H1 (cell line): ENCODE measurements at regions of chr1 and their contacts with region 1.

Region 1: DNA sequence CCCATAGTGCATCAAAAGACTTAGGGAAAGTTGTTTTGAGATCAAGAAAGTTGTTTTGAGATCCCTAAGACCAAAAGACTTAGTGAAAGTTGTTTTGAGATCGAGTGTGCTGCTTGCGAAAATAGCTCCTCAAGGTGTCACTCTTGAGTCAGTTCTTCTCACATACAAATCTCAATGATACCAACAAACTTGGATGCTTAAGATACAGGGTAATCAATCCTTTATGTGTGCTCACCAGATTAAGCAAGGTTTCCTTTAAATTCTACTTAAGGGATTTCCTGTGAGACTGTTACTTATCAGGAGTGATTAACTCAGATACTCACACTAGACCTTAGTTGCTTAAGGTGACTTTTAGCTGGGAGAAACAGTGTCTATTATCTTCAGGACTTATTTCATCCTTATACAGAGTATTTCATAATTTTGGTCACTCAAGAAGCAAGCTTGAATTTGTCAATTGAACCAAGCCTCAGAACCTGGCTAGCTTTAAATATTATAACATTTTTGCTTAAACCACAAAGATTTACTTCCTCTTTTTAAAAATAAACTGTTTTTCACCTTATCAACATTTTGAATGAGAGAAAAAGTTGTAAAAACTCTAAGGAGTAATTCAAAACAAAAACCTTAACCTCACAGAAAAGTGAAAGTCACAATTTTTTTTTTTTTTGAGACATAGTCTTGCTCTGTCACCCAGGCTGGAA is 8.0 kb upstream of the RLF start:
- DNase-seq: no peak
- H3K4me3 ChIP-seq: no peak overlapping the region
- H3K27ac ChIP-seq: no peak overlapping the region
- H3K4me1 ChIP-seq: no peaks in the 10 kb centered on the region
- H3K27me3 ChIP-seq: no peaks in the 10 kb centered on the region
- CTCF ChIP-seq: peak in 2 of 3 experiments; percentile 59 to 78; a peak in 3 of 4 replicates
- EP300 ChIP-seq: no peak
- POLR2A ChIP-seq: no peak
- RAD21 ChIP-seq: peak; percentile 68 to 73

Region 2: GRCh38 chr1:40132383-40133311 is 20.6 kb before region 1 on chr1:
- CTCF ChIA-PET with region 1: interaction called, 10 read pairs
- POLR2A ChIA-PET with region 1: no interaction called
- DNase-seq: no peak
- H3K4me3 ChIP-seq: no peak overlapping the region
- H3K27ac ChIP-seq: no peak overlapping the region
- H3K4me1 ChIP-seq: no peaks in the 10 kb centered on the region; a peak in 1 of 7 replicates
- H3K27me3 ChIP-seq: no peaks in the 10 kb centered on the region
- CTCF ChIP-seq: no peak
- EP300 ChIP-seq: no peak
- POLR2A ChIP-seq: no peak
- RAD21 ChIP-seq: no peak

Region 3: GRCh38 chr1:40185951-40186864 is 33.0 kb after region 1 on chr1:
- CTCF ChIA-PET with region 1: interaction called, 33 read pairs
- POLR2A ChIA-PET with region 1: no interaction called
- DNase-seq: no peak
- H3K4me3 ChIP-seq: no peak overlapping the region
- H3K27ac ChIP-seq: no peak overlapping the region
- H3K4me1 ChIP-seq: peaks cover 0 to 3% (median 0%) of the 10 kb centered on the region in 4 experiments; a peak in 1 of 7 replicates
- H3K27me3 ChIP-seq: no peaks in the 10 kb centered on the region
- CTCF ChIP-seq: no peak
- EP300 ChIP-seq: no peak
- POLR2A ChIP-seq: no peak
- RAD21 ChIP-seq: no peak

Region 4: DNA sequence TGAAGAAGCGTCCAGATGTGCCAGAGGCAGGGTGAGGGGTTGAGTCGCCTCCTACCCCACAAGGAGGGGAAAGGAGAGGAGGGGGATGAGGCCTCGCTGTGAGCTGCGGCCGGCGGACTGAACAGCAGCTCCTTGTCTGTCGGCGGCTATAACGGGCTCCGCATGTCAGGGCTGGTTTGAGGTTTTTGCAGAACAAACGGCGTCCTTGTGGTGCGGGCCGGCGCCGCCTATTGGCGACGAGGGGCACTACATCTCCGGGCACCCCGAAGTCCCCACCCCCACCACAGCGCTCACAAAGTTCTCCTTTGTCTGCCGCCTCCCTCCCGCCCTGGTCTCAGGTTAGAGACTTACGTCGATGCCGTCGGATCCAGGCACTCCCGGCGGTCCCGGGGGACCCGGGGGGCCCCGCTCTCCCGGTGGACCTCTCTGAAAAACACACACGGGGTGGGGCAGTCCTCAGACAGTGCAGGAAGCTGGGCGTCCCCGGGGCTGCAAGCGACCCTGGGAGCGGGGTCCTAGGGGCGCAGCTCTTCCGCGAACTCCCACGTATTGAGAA is 162.1 kb after region 1 on chr1:
- CTCF ChIA-PET with region 1: interaction called, 25 read pairs
- POLR2A ChIA-PET with region 1: no interaction called
- DNase-seq: peak; percentile 76 to 93
- H3K4me3 ChIP-seq: peak overlapping the region; percentile 42 to 63 (median 54)
- H3K27ac ChIP-seq: no peak overlapping the region
- H3K4me1 ChIP-seq: peaks cover 8 to 18% (median 11%) of the 10 kb centered on the region in 4 experiments
- H3K27me3 ChIP-seq: peaks cover 20 to 53% (median 45%) of the 10 kb centered on the region in 4 experiments
- CTCF ChIP-seq: peak in 2 of 3 experiments; percentile 69 to 86; a peak in 3 of 4 replicates
- EP300 ChIP-seq: no peak
- POLR2A ChIP-seq: 0 out of 3 replicates have a peak, but pooled peaks of 1 of the 2 experiments have one; percentile 37
- RAD21 ChIP-seq: peak; percentile 60 to 66

Region 5: GRCh38 chr1:40404670-40405462 is 251.6 kb after region 1 on chr1:
- CTCF ChIA-PET with region 1: interaction called, 23 read pairs
- POLR2A ChIA-PET with region 1: no interaction called
- DNase-seq: no peak
- H3K4me3 ChIP-seq: no peak overlapping the region
- H3K27ac ChIP-seq: no peak overlapping the region
- H3K4me1 ChIP-seq: peaks cover 0 to 6% (median 1%) of the 10 kb centered on the region in 4 experiments; a peak in 2 of 7 replicates
- H3K27me3 ChIP-seq: no peaks in the 10 kb centered on the region
- CTCF ChIP-seq: peak in 2 of 3 experiments; percentile 48 to 72; a peak in 2 of 4 replicates
- EP300 ChIP-seq: no peak
- POLR2A ChIP-seq: no peak
- RAD21 ChIP-seq: peak; percentile 82 to 83